ENCODE measurements at regions of chr17 and their contacts with region 1.

Region 1: GRCh38 chr17:29246628-29247027 is at the start of gene CRYBA1:
- DNase-seq: no peak
- H3K4me3 ChIP-seq: no peak within 1 kb of the TSS
- H3K27ac ChIP-seq: peak within 1 kb of the TSS in 40 of 59 donors; percentile 5 to 83 (median 52)
- H3K27me3 ChIP-seq: no peaks in the 10 kb centered on the region
- CTCF ChIP-seq: peak in 1 of 56 donors; percentile 18
- total RNA-seq, gene CRYBA1: not detected

Region 2: DNA sequence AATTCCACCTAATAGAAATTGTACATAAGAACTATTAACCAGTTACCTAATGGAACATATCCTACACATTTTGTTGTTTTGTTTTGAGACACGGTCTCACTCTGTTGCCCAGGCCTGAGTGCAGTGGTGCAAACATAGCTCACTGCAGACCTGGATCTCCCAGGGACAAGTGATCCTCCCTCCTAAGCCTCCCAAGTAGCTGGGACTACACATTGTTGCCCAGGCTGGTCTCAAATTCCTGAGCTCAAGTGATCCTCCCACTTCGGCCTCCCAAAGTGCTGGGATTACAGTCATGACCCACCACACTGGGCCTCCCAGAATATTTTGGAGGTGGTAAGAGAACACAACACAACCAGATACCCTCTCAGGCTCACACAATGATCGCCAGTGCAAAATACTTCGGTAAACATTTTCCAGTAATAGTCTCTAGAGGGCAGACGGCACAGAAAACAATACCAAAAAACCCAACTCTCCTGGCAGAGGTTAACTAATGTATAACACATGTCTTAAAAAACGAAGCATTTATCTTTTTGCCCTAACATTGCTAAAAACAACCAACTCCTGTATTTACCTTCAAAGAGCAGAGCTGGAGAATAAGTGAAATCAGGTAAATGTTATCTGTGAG is 36.8 kb after region 1 on chr17:
- intact Hi-C with region 1: loop called in 1 of 2 experiments (anchors 5 kb)
- DNase-seq: no peak
- H3K4me3 ChIP-seq: peak overlapping the region in 38 of 59 donors; percentile 1 to 51 (median 20)
- H3K27ac ChIP-seq: peak overlapping the region in 28 of 59 donors; percentile 3 to 71 (median 33)
- H3K27me3 ChIP-seq: no peaks in the 10 kb centered on the region
- CTCF ChIP-seq: peak in 28 of 56 donors; percentile 5 to 45 (median 26)

Region 3: DNA sequence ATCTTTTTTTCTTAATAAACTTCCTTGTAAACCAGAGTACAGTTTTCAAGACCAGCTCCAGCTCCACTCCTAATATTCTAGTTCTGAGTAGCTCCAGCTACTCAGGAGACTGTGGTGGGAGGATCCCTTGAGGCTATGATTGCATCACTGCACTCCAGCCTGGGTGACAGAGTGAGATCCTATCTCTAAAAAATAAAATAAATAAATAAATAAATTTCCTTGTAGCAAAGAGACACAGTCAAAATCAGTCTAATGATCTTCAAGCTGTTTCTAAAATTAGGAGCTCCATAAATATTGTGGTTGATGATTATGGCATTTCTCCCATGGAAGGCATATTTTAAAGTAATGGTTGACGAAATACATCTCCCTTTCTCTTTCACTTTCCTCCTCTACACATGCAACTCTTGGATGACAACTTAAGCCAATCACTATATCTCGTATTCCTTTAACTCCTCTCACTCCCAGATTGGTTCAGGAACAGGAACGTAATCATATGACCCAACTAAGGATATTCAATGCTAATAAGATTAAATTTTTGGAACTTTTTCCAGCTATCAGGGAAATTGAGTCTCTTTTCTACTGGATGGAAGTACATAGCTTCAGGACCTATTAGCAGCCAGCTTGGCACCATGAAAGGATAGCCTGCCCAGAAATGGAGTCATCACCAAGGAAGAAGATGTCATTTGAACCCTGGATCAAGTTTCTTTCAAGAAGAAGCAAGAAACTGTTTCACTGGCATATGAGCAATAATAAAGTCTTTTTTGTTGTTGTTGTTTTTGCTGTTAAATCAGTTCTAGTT is 101.4 kb after region 1 on chr17:
- intact Hi-C with region 1: no loop called
- DNase-seq: no peak
- H3K4me3 ChIP-seq: no peak overlapping the region
- H3K27ac ChIP-seq: no peak overlapping the region
- H3K27me3 ChIP-seq: no peaks in the 10 kb centered on the region
- CTCF ChIP-seq: no peak